ENCODE measurements at regions of chr10 and their contacts with region 1.

Region 1: GRCh38 chr10:86693721-86694369 is 25.5 kb downstream of the LDB3 start:
- DNase-seq: peak; percentile 62
- H3K4me3 ChIP-seq: no peak overlapping the region
- H3K27ac ChIP-seq: no peak overlapping the region
- H3K4me1 ChIP-seq: no peaks in the 10 kb centered on the region
- H3K27me3 ChIP-seq: no peaks in the 10 kb centered on the region
- CTCF ChIP-seq: peak; percentile 63

Region 2: GRCh38 chr10:86958901-86959740 is 265.3 kb after region 1 on chr10:
- intact Hi-C with region 1: loop called (anchors 5 kb)
- DNase-seq: peak; percentile 34
- H3K4me3 ChIP-seq: no peak overlapping the region
- H3K27ac ChIP-seq: no peak overlapping the region
- H3K4me1 ChIP-seq: no peaks in the 10 kb centered on the region
- H3K27me3 ChIP-seq: no peaks in the 10 kb centered on the region
- CTCF ChIP-seq: no peak